Spleen (tissue), 13 donors: ENCODE measurements at regions of chr1 and their contacts with region 1.

Region 1: GRCh38 chr1:52296345-52296744 is 69.7 kb downstream of the CC2D1B start:
- DNase-seq: no peak
- H3K4me3 ChIP-seq: no peak overlapping the region
- H3K27ac ChIP-seq: no peak overlapping the region
- H3K4me1 ChIP-seq: no peaks in the 10 kb centered on the region
- H3K27me3 ChIP-seq: no peaks in the 10 kb centered on the region
- CTCF ChIP-seq: peak in 10 of 11 experiments; percentile 27 to 63 (median 56)
- POLR2A ChIP-seq: no peak

Region 2: DNA sequence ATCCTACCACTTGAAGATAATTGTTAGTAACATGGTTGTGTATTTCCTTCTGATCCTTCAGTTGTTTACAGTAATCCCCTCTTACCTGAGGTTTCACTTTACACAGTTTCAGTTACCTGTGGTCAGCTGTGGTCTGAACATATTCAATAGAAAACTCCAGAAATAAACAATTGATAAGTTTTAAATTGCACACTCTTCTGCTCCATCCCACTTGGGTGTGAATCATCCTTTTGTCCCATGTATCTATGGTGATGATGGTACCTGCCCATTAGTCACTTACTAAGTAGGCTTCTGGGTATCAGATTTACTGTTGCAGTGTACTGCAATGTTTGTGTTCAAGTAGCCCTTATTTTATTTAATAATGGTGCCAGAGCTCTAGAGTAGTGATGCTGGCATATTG is 616.9 kb before region 1 on chr1:
- intact Hi-C with region 1: no loop called
- DNase-seq: no peak
- H3K4me3 ChIP-seq: no peak overlapping the region
- H3K27ac ChIP-seq: no peak overlapping the region
- H3K4me1 ChIP-seq: peaks cover 0 to 8% (median 2%) of the 10 kb centered on the region in 6 donors
- H3K27me3 ChIP-seq: no peaks in the 10 kb centered on the region
- CTCF ChIP-seq: no peak
- POLR2A ChIP-seq: no peak

Region 3: GRCh38 chr1:52127181-52128180 is 168.9 kb before region 1 on chr1:
- intact Hi-C with region 1: loop called (anchors 10 kb)
- DNase-seq: no peak
- H3K4me3 ChIP-seq: no peak overlapping the region
- H3K27ac ChIP-seq: no peak overlapping the region
- H3K4me1 ChIP-seq: peaks cover 0 to 6% (median 0%) of the 10 kb centered on the region in 6 donors
- H3K27me3 ChIP-seq: peaks cover 0 to 25% (median 0%) of the 10 kb centered on the region in 7 donors
- CTCF ChIP-seq: peak; percentile 11 to 72 (median 56)
- POLR2A ChIP-seq: no peak

Region 4: DNA sequence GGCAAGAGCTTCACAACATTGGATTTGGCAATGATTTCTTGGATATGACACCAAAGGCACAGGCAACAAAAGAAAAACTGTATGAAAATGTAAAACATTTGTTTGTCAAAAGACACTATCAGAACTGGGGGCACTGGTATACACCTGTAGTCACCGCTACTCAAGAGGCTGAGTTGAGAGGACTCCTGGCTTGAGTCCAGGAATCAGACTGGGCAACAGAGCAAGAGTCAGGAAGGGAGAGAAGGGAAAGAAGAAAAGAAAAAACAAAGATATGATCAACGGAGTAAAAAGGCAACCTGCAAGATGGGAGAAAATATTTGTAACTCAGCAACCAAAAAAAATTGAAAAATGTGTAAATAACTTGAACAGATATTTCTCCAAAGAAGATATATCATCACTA is 262.6 kb after region 1 on chr1:
- intact Hi-C with region 1: no loop called
- DNase-seq: no peak
- H3K4me3 ChIP-seq: no peak overlapping the region
- H3K27ac ChIP-seq: no peak overlapping the region
- H3K4me1 ChIP-seq: peaks cover 4 to 12% (median 8%) of the 10 kb centered on the region in 6 donors
- H3K27me3 ChIP-seq: no peaks in the 10 kb centered on the region
- CTCF ChIP-seq: no peak
- POLR2A ChIP-seq: no peak

Region 5: GRCh38 chr1:52825868-52826267 is 529.5 kb after region 1 on chr1:
- intact Hi-C with region 1: no loop called
- DNase-seq: no peak
- H3K4me3 ChIP-seq: no peak overlapping the region
- H3K27ac ChIP-seq: no peak overlapping the region
- H3K4me1 ChIP-seq: no peaks in the 10 kb centered on the region
- H3K27me3 ChIP-seq: no peaks in the 10 kb centered on the region
- CTCF ChIP-seq: no peak
- POLR2A ChIP-seq: no peak